ENCODE measurements at regions of chr5 and their contacts with region 1.

Region 1: DNA sequence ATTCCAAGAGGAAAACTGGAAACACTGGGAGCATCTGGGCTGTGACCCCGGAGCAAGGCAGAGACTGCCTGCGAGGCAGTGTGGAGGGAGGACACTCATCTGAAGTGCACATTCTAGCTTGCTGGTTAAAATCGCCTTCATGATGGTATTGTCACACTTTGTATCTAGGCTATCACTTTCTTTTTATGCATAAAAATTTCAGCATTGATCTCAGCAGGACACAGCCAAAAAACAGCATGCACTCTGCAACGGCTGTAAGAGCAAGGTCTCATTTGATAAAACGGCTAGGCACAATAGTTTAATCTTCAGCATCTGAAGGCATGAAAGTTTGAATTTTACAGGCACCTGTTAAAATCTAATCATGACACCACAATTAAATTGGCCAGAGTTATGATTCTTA is 110.8 kb upstream of the IRX1 start:
- DNase-seq: no peak
- H3K4me3 ChIP-seq: no peak overlapping the region
- H3K27ac ChIP-seq: no peak overlapping the region
- H3K4me1 ChIP-seq: no peaks in the 10 kb centered on the region
- H3K27me3 ChIP-seq: no peaks in the 10 kb centered on the region
- CTCF ChIP-seq: no peak
- POLR2A ChIP-seq: no peak

Region 2: DNA sequence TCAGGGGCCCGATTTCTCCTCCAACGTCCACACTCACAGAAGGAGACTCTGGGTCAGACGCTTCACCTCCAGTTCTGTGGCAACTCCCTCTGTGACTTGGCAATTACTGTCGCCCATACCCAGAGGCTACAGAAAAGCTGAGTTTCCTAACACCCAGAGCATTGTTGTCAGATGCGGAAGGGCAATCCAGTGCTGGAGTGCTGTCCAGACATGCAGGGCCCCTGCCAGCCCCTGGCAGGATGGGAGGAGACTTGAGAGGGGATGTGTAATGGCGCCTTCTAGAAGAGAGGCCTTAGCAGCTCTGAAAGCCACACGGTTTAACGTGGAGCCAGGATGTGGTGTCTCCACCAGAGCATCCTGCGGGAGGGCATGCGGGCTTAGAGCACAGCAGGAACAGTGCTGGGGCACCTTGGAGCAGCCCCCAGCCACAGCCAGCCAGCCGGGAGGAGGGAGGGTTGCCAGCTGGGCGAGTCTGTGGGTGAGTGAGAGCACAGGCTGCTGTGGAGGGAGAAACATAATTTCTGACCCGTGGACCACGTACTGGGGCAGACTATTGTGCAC is 28.6 kb before region 1 on chr5:
- intact Hi-C with region 1: loop called (anchors 1 kb)
- DNase-seq: peak in 1 of 2 donors; percentile 62
- H3K4me3 ChIP-seq: no peak overlapping the region
- H3K27ac ChIP-seq: no peak overlapping the region
- H3K4me1 ChIP-seq: no peaks in the 10 kb centered on the region
- H3K27me3 ChIP-seq: no peaks in the 10 kb centered on the region
- CTCF ChIP-seq: no peak
- POLR2A ChIP-seq: no peak

Region 3: DNA sequence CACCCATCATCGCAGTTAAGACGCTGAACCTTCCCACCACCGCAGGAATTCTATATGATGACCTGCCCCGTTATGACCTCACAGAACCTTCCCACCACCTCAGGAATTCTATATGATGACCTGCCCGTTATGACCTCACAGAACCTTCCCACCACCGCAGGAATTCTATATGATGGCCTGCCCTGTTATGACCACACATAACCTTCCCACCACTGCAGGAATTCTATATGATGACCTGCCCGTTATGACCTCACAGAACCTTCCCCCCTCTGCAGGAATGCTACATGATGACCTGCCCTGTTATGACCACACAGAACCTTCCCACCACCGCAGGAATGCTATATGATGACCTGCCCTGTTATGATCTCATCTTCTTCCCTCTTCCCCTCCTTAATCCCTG is 175.1 kb after region 1 on chr5:
- intact Hi-C with region 1: no loop called
- DNase-seq: no peak
- H3K4me3 ChIP-seq: no peak overlapping the region
- H3K27ac ChIP-seq: no peak overlapping the region
- H3K4me1 ChIP-seq: no peaks in the 10 kb centered on the region
- H3K27me3 ChIP-seq: no peaks in the 10 kb centered on the region
- CTCF ChIP-seq: no peak
- POLR2A ChIP-seq: no peak

Region 4: GRCh38 chr5:4646715-4647375 is 1162.0 kb after region 1 on chr5:
- intact Hi-C with region 1: no loop called
- DNase-seq: no peak
- H3K4me3 ChIP-seq: no peak overlapping the region
- H3K27ac ChIP-seq: no peak overlapping the region
- H3K4me1 ChIP-seq: no peaks in the 10 kb centered on the region
- H3K27me3 ChIP-seq: no peaks in the 10 kb centered on the region
- CTCF ChIP-seq: no peak
- POLR2A ChIP-seq: no peak

Region 5: DNA sequence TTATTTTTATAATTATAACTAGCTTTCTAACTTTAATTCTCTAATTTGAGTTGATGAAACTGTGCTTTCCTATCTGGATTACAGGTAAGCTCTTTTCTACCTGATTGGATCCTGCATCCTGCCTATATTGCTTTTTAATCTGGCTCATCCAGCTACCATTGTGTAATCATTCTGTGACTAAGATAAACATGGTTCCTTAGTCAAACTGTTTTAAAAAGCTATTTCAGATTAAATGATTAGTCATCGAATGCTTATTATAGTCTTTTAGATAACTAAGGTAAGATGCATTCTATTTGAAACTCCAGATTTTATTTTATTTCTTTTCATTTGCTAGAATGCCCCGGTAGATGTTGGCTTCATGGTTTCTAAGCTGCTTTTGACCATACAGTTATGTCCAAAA is 1988.4 kb after region 1 on chr5:
- intact Hi-C with region 1: no loop called
- DNase-seq: no peak
- H3K4me3 ChIP-seq: no peak overlapping the region
- H3K27ac ChIP-seq: no peak overlapping the region
- H3K4me1 ChIP-seq: no peaks in the 10 kb centered on the region
- H3K27me3 ChIP-seq: no peaks in the 10 kb centered on the region
- CTCF ChIP-seq: no peak
- POLR2A ChIP-seq: no peak

Measured in breast epithelium (tissue), 4 donors.